Activated naive CD4-positive, alpha-beta T cell treated with anti-CD3 and anti-CD28 coated beads for 36 hours (primary cell): ENCODE measurements at regions of chr4 and their contacts with region 1.

Region 1: GRCh38 chr4:153083447-153083947 is 120.7 kb upstream of the TRIM2 start:
- DNase-seq: peak; percentile 70
- H3K4me3 Mint-ChIP-seq: peak overlapping the region; percentile 28
- H3K27ac Mint-ChIP-seq: no peak overlapping the region
- H3K4me1 Mint-ChIP-seq: peaks cover 43% of the 10 kb centered on the region
- H3K27me3 Mint-ChIP-seq: peaks cover 2% of the 10 kb centered on the region

Region 2: GRCh38 chr4:152779513-152780266 is 303.8 kb before region 1 on chr4 and contains the starts of genes ARFIP1 and TIGD4:
- CTCF ChIA-PET with region 1: interaction called, 7 read pairs
- intact Hi-C with region 1: loop called (anchors 1 kb)
- DNase-seq: peak; percentile 97
- H3K4me3 Mint-ChIP-seq: peak within 1 kb of the TSS; percentile 91
- H3K27ac Mint-ChIP-seq: peak within 1 kb of the TSS; percentile 75
- H3K4me1 Mint-ChIP-seq: peaks cover 23% of the 10 kb centered on the region
- H3K27me3 Mint-ChIP-seq: peaks cover 4% of the 10 kb centered on the region
- total RNA-seq, gene ARFIP1: 5.0 to 5.1 TPM
- total RNA-seq, gene TIGD4: 0.07 to 0.27 TPM

Region 3: GRCh38 chr4:153095448-153096204 is 12.1 kb after region 1 on chr4:
- CTCF ChIA-PET with region 1: interaction called, 75 read pairs
- intact Hi-C with region 1: no loop called
- DNase-seq: no peak
- H3K4me3 Mint-ChIP-seq: no peak overlapping the region
- H3K27ac Mint-ChIP-seq: no peak overlapping the region
- H3K4me1 Mint-ChIP-seq: peaks cover 4% of the 10 kb centered on the region
- H3K27me3 Mint-ChIP-seq: no peaks in the 10 kb centered on the region

Region 4: GRCh38 chr4:153122855-153123254 is 39.4 kb after region 1 on chr4:
- CTCF ChIA-PET with region 1: interaction called, 376 read pairs
- intact Hi-C with region 1: loop called (anchors 1 kb)
- DNase-seq: no peak
- H3K4me3 Mint-ChIP-seq: no peak overlapping the region
- H3K27ac Mint-ChIP-seq: no peak overlapping the region
- H3K4me1 Mint-ChIP-seq: peaks cover 10% of the 10 kb centered on the region
- H3K27me3 Mint-ChIP-seq: no peaks in the 10 kb centered on the region

Region 5: DNA sequence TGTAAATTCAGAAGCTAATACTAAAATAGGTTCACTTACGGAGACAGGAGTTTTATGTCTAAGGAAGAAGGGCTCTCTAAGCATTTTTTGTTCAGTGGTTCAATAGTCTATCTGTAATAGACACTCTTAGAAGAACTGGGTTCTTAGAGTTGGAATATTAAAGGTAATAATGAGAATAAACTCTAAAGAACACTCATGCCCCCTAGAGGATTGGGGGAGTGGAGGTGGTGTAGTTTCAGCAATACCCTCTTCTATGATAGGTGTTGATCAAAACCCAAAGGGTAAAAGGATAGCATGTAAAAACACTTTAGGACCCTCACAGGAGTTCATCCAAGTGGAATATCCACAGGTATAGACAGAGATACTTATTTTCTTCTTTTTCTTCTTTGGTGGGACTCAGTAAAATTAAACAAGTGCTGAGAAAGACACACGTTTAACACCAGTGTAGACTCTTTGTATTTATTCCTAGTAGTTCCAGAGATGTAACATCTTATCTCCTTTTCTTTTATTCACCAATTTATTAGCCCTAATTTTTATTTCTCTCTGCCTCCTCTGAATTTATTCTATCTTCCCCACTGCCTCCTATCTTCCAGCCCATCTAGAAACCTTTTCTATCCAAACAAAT is 235.3 kb after region 1 on chr4:
- CTCF ChIA-PET with region 1: interaction called, 5 read pairs
- intact Hi-C with region 1: loop called (anchors 1 kb)
- DNase-seq: peak; percentile 50
- H3K4me3 Mint-ChIP-seq: no peak overlapping the region
- H3K27ac Mint-ChIP-seq: no peak overlapping the region
- H3K4me1 Mint-ChIP-seq: no peaks in the 10 kb centered on the region
- H3K27me3 Mint-ChIP-seq: no peaks in the 10 kb centered on the region